Heart right ventricle (tissue), 16 donors: ENCODE measurements at regions of chr2 and their contacts with region 1.

Region 1: DNA sequence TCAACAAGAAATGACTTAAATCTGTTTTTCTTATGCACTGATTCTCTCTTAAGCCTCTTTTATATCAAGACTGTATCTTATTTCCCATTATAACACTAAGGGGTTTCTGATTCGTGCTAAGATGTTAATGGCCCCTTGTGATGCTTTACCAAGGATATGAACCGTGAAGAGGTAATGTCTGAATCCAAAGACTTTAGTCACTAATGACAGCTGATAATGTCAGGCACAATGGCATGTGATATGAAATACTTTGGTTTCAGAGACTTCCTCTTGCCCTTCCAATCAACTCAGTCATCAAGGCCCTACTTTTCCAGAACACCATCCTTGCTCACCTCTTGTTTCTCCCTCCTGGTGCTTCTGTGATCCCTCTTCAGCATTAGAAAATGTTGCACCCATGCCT is 262.8 kb downstream of the KCNE4 start:
- DNase-seq: no peak
- ATAC-seq: no peak
- H3K4me3 ChIP-seq: no peak overlapping the region
- H3K27ac ChIP-seq: no peak overlapping the region
- H3K4me1 ChIP-seq: no peaks in the 10 kb centered on the region
- H3K27me3 ChIP-seq: no peaks in the 10 kb centered on the region
- CTCF ChIP-seq: no peak

Region 2: DNA sequence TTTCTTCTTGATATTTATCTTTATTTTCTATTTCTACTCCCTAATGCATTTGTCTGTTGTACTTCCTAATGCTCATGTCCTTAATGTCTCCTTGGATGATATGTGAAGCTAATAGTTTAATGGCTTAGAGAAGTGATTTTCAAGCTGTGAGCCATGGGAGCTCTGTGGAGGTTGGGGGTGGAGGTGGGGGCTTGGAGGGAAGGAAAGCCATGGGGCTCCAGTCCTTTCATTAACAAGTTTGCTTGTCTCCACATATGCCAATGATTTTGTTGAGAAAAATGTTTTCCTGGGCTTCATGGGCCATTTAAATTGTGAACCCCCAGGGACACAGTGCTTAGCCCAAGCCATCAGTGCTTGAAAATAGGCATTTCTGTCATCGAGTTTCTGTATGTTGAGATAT is 23.2 kb after region 1 on chr2:
- intact Hi-C with region 1: loop called in 1 of 10 experiments (anchors 1 kb)
- DNase-seq: no peak
- ATAC-seq: no peak
- H3K4me3 ChIP-seq: no peak overlapping the region
- H3K27ac ChIP-seq: no peak overlapping the region
- H3K4me1 ChIP-seq: no peaks in the 10 kb centered on the region
- H3K27me3 ChIP-seq: no peaks in the 10 kb centered on the region
- CTCF ChIP-seq: no peak